ENCODE measurements at regions of chr9 and their contacts with region 1.

Region 1: GRCh38 chr9:115135821-115136778 is 18.1 kb upstream of the TNC start:
- DNase-seq: no peak
- H3K4me3 ChIP-seq: no peak overlapping the region
- H3K27ac ChIP-seq: no peak overlapping the region
- H3K4me1 ChIP-seq: no peaks in the 10 kb centered on the region
- H3K27me3 ChIP-seq: no peaks in the 10 kb centered on the region
- CTCF ChIP-seq: no peak

Region 2: GRCh38 chr9:115192835-115193525 is 56.9 kb after region 1 on chr9:
- intact Hi-C with region 1: loop called (anchors 2 kb)
- DNase-seq: no peak
- H3K4me3 ChIP-seq: no peak overlapping the region
- H3K27ac ChIP-seq: no peak overlapping the region
- H3K4me1 ChIP-seq: peaks cover 0 to 2% (median 0%) of the 10 kb centered on the region in 4 donors
- H3K27me3 ChIP-seq: no peaks in the 10 kb centered on the region
- CTCF ChIP-seq: no peak

Region 3: GRCh38 chr9:115328228-115328627 is 192.1 kb after region 1 on chr9:
- intact Hi-C with region 1: no loop called
- DNase-seq: peak; percentile 69 to 89
- H3K4me3 ChIP-seq: no peak overlapping the region
- H3K27ac ChIP-seq: peak overlapping the region; percentile 50 to 68
- H3K4me1 ChIP-seq: peaks cover 0 to 31% (median 19%) of the 10 kb centered on the region in 4 donors
- H3K27me3 ChIP-seq: no peaks in the 10 kb centered on the region
- CTCF ChIP-seq: peak in 1 of 2 experiments; percentile 11

Measured in tibial artery (tissue), 4 donors.